ENCODE measurements at regions of chr7 and their contacts with region 1.

Region 1: GRCh38 chr7:101602484-101603241 is 26.4 kb downstream of the MYL10 start:
- DNase-seq: peak; percentile 77 to 79
- ATAC-seq: peak; percentile 84 to 92 (median 88)
- H3K4me3 ChIP-seq: no peak overlapping the region
- H3K27ac ChIP-seq: no peak overlapping the region
- H3K4me1 ChIP-seq: peaks cover 0 to 15% (median 4%) of the 10 kb centered on the region in 9 donors
- H3K27me3 ChIP-seq: peaks cover 0 to 12% (median 0%) of the 10 kb centered on the region in 7 donors
- CTCF ChIP-seq: peak; percentile 78 to 97 (median 90)

Region 2: DNA sequence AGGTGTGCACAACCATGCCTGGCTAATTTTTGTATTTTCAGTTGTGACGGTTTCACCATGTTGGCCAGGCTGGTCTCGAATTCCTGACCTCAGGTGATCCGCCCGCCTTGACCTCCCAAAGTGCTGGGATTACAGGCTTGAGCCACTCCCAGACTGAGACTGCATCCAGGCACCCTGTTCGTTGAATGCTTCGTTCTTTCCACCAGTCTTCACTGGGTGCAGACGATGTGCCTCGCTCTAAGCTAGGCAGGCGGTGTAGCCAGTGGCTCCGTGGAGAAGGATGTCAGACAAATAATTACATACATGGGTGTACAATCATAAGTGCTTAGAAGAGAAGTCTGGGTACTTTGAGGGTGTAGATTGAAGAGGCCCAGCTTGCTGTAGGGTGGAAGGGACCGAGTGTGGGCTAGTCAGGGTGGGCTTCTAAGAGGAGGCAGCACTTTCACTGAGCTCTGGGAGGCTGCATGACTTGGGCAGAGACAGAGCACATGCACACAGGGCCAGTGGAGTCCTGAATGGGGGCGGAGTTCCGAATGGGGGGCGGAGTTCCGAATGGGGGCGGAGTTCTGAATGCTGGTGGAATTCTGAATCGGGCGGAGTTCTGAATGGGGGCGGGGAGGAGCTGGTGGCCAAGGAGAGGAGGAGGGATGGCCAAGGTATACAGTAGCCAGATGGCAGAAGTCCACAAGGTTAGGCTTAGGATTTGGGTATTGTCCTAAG is 165.6 kb before region 1 on chr7:
- intact Hi-C with region 1: no loop called
- DNase-seq: no peak
- ATAC-seq: no peak
- H3K4me3 ChIP-seq: no peak overlapping the region
- H3K27ac ChIP-seq: no peak overlapping the region
- H3K4me1 ChIP-seq: no peaks in the 10 kb centered on the region
- H3K27me3 ChIP-seq: peaks cover 0 to 80% (median 30%) of the 10 kb centered on the region in 7 donors
- CTCF ChIP-seq: no peak

Region 3: DNA sequence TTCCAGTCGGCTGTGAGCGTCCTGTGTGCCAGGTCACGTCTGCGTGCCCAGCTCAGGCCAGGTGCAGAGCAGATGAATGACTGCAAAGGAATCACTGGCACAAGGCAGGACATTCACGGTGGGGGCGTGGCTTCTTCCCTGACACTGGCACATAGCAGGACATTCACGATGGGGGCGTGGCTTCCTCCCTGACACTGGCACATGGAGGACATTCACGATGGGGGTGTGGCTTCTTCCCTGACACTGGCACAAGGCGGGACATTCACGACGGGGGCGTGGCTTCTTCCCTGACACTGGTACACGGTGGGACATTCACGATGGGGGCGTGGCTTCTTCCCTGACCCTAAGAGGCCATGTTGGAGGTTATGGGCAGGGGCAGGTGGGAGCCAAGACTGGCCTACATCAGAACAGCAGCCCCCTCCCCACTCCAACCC is 37.9 kb before region 1 on chr7:
- intact Hi-C with region 1: no loop called
- DNase-seq: no peak
- ATAC-seq: no peak
- H3K4me3 ChIP-seq: no peak overlapping the region
- H3K27ac ChIP-seq: no peak overlapping the region
- H3K4me1 ChIP-seq: peaks cover 0 to 12% (median 0%) of the 10 kb centered on the region in 9 donors
- H3K27me3 ChIP-seq: peaks cover 0 to 38% (median 5%) of the 10 kb centered on the region in 7 donors
- CTCF ChIP-seq: no peak

Region 4: DNA sequence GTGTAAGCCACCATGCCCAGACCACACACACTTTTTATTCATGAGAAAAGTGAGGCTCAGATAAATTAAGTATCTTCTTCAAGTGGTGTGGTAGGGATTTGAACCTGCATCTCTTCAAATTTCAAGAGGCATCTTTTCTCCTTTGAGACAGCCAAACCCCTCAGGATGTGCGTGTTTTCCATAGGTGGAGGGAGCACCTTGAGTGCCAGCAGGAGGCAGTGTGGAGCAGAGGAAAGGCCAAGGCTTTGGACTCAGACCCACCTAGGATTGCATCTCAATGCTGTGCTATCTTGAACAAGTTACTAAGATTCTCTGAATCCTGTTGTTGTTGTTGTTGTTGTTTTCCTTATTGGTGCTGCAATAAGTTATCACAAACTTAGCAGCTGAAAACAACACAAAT is 66.6 kb after region 1 on chr7:
- intact Hi-C with region 1: no loop called
- DNase-seq: no peak
- ATAC-seq: no peak
- H3K4me3 ChIP-seq: no peak overlapping the region
- H3K27ac ChIP-seq: no peak overlapping the region
- H3K4me1 ChIP-seq: peaks cover 0 to 7% (median 0%) of the 10 kb centered on the region in 9 donors
- H3K27me3 ChIP-seq: peaks cover 0 to 7% (median 0%) of the 10 kb centered on the region in 7 donors
- CTCF ChIP-seq: peak in 1 of 9 donors; percentile 27

Region 5: DNA sequence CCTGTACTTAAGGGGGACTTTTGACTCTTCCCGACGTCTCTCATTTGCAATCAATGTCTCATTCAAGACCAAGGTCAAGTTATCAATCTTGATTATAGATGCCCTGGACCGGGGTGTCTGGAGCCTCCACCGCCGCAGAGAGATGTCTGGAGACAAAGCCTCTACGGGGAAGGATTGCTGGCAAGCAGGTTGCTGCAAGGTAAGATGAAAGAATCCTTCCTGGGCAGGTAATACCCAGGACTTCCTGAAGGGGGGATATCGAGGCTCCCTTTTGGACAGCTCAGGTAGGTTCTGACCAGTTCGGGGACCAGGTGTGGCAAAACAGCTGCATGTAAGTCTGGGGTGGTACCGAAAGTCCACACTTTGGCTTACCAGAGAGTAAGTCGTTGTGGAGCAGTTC is 202.3 kb after region 1 on chr7:
- intact Hi-C with region 1: loop called in 4 of 10 experiments (anchors 5 to 10 kb)
- DNase-seq: no peak
- ATAC-seq: no peak
- H3K4me3 ChIP-seq: no peak overlapping the region
- H3K27ac ChIP-seq: no peak overlapping the region
- H3K4me1 ChIP-seq: peaks cover 0 to 12% (median 4%) of the 10 kb centered on the region in 9 donors
- H3K27me3 ChIP-seq: peaks cover 0 to 61% (median 32%) of the 10 kb centered on the region in 7 donors
- CTCF ChIP-seq: no peak

Region 6: DNA sequence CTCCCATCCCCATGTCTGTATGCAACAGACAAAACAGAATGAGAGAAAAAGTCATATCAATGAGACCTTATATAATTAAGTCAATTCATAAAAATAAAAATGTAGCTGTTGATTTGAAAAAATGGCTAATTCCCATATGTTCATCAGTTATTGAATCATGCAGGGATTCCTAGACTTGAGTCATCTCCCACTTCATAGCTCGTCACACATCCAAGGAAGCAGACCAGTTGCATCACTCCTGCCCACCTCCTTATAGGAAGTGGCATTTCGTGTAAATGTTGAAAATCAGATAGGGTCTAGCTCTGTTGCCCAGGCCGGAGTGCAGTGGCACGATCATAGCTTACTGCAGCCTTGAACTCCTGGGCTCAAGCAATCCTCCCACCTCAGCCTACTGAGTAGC is 627.9 kb after region 1 on chr7:
- intact Hi-C with region 1: loop called in 5 of 10 experiments (anchors 5 to 10 kb)
- DNase-seq: no peak
- ATAC-seq: no peak
- H3K4me3 ChIP-seq: no peak overlapping the region
- H3K27ac ChIP-seq: no peak overlapping the region
- H3K4me1 ChIP-seq: peaks cover 0 to 15% (median 4%) of the 10 kb centered on the region in 9 donors
- H3K27me3 ChIP-seq: no peaks in the 10 kb centered on the region
- CTCF ChIP-seq: no peak

Region 7: DNA sequence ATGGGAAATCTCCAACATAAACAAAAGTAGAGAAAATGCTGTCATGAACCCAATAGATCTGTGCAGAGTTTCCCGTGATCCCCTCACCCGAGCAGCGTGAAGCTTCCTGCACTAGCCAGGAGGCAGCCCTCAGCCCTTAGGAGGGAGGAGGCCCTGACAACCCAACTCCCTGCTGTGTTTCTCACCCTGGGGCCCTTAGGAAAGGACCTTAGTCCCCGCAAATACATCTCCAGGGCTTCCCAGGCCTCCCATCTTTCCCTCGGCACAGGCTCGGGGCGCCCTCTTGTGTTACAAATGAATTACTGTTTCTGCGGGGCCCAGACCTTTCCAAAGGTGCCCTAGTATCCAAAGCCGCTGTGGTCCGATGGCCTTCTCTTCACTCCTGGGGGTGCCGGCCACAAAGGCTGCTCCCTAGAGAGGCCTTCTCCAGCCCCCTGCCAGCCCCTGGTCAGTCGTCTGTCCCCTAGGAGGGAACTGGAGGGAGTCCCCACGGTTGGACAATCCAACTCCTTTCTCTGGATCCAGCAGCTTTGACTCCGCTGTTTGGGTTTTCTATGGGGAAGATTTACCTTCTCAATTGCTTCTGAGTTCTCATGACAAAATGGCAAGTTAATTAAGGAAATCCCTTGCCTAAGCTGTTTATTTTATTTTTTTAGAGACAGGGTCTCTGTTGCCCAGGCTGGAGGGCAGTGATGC is 634.1 kb after region 1 on chr7:
- intact Hi-C with region 1: loop called in 7 of 10 experiments (anchors 5 to 10 kb)
- DNase-seq: peak; percentile 47 to 54
- ATAC-seq: peak; percentile 59 to 85 (median 80)
- H3K4me3 ChIP-seq: no peak overlapping the region
- H3K27ac ChIP-seq: no peak overlapping the region
- H3K4me1 ChIP-seq: peaks cover 0 to 21% (median 6%) of the 10 kb centered on the region in 9 donors
- H3K27me3 ChIP-seq: no peaks in the 10 kb centered on the region
- CTCF ChIP-seq: peak; percentile 59 to 87 (median 81)

Region 8: DNA sequence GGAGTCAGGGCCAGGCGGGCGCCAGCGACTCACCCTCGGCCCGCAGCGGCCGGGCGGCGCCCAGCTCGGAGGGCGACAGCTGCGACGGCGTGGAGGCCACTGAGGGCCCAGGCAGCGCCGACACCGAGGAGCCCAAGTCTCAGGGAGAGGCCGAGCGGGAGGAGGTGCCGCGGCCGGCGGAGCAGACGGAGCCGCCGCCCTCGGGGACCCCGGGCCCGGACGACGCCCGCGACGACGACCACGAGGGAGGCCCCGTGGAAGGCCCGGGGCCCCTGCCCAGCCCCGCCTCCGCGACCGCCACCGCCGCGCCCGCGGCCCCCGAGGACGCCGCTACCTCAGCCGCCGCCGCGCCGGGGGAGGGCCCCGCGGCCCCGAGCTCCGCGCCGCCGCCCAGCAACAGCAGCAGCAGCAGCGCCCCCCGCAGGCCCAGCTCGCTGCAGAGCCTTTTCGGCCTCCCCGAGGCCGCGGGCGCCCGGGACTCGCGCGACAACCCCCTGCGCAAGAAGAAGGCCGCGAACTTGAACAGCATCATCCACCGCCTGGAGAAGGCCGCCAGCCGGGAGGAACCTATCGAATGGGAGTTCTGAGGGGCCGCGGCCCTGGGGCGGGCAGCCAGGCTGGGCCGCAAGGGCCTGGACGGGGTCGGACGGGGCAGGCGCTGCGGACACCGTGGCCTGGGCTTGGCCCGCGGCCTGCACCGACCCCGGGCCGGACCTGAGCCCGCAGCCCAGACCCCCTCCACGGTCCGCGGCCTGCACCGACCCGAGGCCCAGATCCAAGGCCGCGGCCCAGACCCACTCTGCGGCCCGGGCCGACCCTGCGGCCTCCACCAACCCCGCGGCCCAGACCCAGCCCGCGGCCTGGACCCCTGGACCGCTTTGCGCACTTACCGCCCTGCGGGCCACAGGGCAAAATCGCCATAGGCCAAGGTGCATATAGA is 646.1 kb after region 1 on chr7:
- intact Hi-C with region 1: loop called in 2 of 10 experiments (anchors 10 kb)
- DNase-seq: no peak
- ATAC-seq: peak in 2 of 8 donors; percentile 29 to 30
- H3K4me3 ChIP-seq: no peak overlapping the region
- H3K27ac ChIP-seq: no peak overlapping the region
- H3K4me1 ChIP-seq: no peaks in the 10 kb centered on the region
- H3K27me3 ChIP-seq: no peaks in the 10 kb centered on the region
- CTCF ChIP-seq: no peak

Region 9: GRCh38 chr7:102272075-102272917 is 669.6 kb after region 1 on chr7:
- intact Hi-C with region 1: loop called in 9 of 10 experiments (anchors 1 to 10 kb)
- DNase-seq: peak; percentile 66 to 82
- ATAC-seq: peak; percentile 87 to 90 (median 89)
- H3K4me3 ChIP-seq: no peak overlapping the region
- H3K27ac ChIP-seq: no peak overlapping the region
- H3K4me1 ChIP-seq: peaks cover 0 to 7% (median 0%) of the 10 kb centered on the region in 9 donors
- H3K27me3 ChIP-seq: no peaks in the 10 kb centered on the region
- CTCF ChIP-seq: peak; percentile 76 to 95 (median 89)

Region 10: GRCh38 chr7:102279537-102280400 is 677.1 kb after region 1 on chr7:
- intact Hi-C with region 1: loop called in 6 of 10 experiments (anchors 5 to 10 kb)
- DNase-seq: peak; percentile 36 to 48
- ATAC-seq: peak; percentile 65 to 90 (median 82)
- H3K4me3 ChIP-seq: no peak overlapping the region
- H3K27ac ChIP-seq: no peak overlapping the region
- H3K4me1 ChIP-seq: peaks cover 0 to 12% (median 1%) of the 10 kb centered on the region in 9 donors
- H3K27me3 ChIP-seq: no peaks in the 10 kb centered on the region
- CTCF ChIP-seq: peak; percentile 57 to 91 (median 88)

Measured in heart right ventricle (tissue), 16 donors.